CD8-positive, alpha-beta memory T cell (primary cell): ENCODE measurements at regions of chr6 and their contacts with region 1.

Region 1: GRCh38 chr6:37018198-37019064 is 13.0 kb downstream of the FGD2 start:
- DNase-seq: peak; percentile 77 to 93 (median 78)
- H3K4me3 ChIP-seq: no peak overlapping the region
- H3K4me3 Mint-ChIP-seq: peak overlapping the region in 3 of 7 donors; percentile 1 to 28 (median 14)
- H3K27ac ChIP-seq: no peak overlapping the region
- H3K27ac Mint-ChIP-seq: peak overlapping the region; percentile 44 to 91 (median 72)
- H3K4me1 ChIP-seq: peaks cover 37% of the 10 kb centered on the region
- H3K4me1 Mint-ChIP-seq: peaks cover 45 to 48% (median 46%) of the 10 kb centered on the region in 3 donors
- H3K27me3 ChIP-seq: no peaks in the 10 kb centered on the region
- H3K27me3 Mint-ChIP-seq: peaks cover 0 to 1% of the 10 kb centered on the region in 2 donors

Region 2: GRCh38 chr6:36840432-36841403 is 177.7 kb before region 1 on chr6:
- CTCF ChIA-PET with region 1: no interaction called
- POLR2A ChIA-PET with region 1: no interaction called
- DNase-seq: peak; percentile 8 to 52 (median 11)
- H3K4me3 ChIP-seq: peak overlapping the region; percentile 38
- H3K4me3 Mint-ChIP-seq: peak overlapping the region; percentile 46 to 78 (median 74)
- H3K27ac ChIP-seq: no peak overlapping the region
- H3K27ac Mint-ChIP-seq: peak overlapping the region in 2 of 8 donors; percentile 19 to 27
- H3K4me1 ChIP-seq: peaks cover 15% of the 10 kb centered on the region
- H3K4me1 Mint-ChIP-seq: peaks cover 11 to 23% (median 12%) of the 10 kb centered on the region in 3 donors
- H3K27me3 ChIP-seq: peaks cover 15% of the 10 kb centered on the region
- H3K27me3 Mint-ChIP-seq: peaks cover 28 to 31% of the 10 kb centered on the region in 2 donors

Region 3: DNA sequence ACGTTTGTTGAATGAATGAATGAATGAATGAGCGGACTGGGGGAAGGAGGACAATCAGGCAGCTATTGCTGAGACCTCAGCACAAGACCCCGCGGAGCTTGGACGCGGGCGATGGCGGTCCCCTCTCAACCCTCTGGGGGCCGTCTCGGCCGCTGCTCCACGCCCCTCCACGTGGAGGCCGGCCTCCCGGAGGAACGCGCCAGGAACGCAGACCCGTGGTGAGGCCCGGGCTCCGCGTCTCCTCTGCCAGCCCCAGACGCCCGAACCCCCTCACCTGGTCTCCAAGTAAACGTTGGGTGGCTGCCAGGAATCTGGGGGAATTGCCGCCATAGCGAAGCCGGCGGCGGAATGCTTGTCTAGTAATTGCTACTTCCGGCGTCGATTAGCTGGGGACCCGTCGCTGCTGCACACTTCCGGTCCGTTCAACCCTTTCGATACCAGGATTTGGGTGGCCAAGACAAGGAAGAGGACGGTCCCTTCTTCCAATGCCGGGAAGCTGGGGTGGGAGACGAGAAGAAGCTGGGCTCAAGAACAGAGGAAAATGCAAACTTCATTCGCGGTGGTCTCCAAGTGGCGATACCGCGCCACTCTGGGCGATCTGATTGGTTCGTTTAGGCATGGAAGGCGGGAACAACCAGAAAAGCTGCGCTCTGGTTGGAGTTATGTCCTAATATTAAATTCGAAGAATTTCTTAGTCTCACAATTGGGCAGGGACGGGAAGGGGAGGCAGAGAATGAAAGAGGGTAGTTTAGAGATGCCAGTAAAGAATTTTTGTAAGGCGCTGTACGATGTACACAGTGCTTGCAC is 143.8 kb before region 1 on chr6 and contains the start of gene PPIL1:
- CTCF ChIA-PET with region 1: interaction called, 29 read pairs
- POLR2A ChIA-PET with region 1: no interaction called
- DNase-seq: peak; percentile 76 to 92 (median 89)
- H3K4me3 ChIP-seq: peak within 1 kb of the TSS; percentile 87
- H3K4me3 Mint-ChIP-seq: peak within 1 kb of the TSS; percentile 96 to 100 (median 100)
- H3K27ac ChIP-seq: peak within 1 kb of the TSS; percentile 89
- H3K27ac Mint-ChIP-seq: peak within 1 kb of the TSS; percentile 94 to 100 (median 99)
- H3K4me1 ChIP-seq: peaks cover 24% of the 10 kb centered on the region
- H3K4me1 Mint-ChIP-seq: peaks cover 34 to 45% (median 37%) of the 10 kb centered on the region in 3 donors
- H3K27me3 ChIP-seq: peaks cover 3% of the 10 kb centered on the region
- H3K27me3 Mint-ChIP-seq: peaks cover 13 to 23% of the 10 kb centered on the region in 2 donors
- total RNA-seq, gene PPIL1: 66.6 to 68.8 TPM

Region 4: GRCh38 chr6:36912586-36912985 is 105.8 kb before region 1 on chr6:
- CTCF ChIA-PET with region 1: interaction called, 13 read pairs
- POLR2A ChIA-PET with region 1: no interaction called
- DNase-seq: peak; percentile 25 to 67 (median 56)
- H3K4me3 ChIP-seq: peak overlapping the region; percentile 32
- H3K4me3 Mint-ChIP-seq: peak overlapping the region; percentile 12 to 81 (median 78)
- H3K27ac ChIP-seq: no peak overlapping the region
- H3K27ac Mint-ChIP-seq: peak overlapping the region; percentile 79 to 98 (median 90)
- H3K4me1 ChIP-seq: peaks cover 22% of the 10 kb centered on the region
- H3K4me1 Mint-ChIP-seq: peaks cover 25 to 47% (median 39%) of the 10 kb centered on the region in 3 donors
- H3K27me3 ChIP-seq: no peaks in the 10 kb centered on the region
- H3K27me3 Mint-ChIP-seq: no peaks in the 10 kb centered on the region

Region 5: DNA sequence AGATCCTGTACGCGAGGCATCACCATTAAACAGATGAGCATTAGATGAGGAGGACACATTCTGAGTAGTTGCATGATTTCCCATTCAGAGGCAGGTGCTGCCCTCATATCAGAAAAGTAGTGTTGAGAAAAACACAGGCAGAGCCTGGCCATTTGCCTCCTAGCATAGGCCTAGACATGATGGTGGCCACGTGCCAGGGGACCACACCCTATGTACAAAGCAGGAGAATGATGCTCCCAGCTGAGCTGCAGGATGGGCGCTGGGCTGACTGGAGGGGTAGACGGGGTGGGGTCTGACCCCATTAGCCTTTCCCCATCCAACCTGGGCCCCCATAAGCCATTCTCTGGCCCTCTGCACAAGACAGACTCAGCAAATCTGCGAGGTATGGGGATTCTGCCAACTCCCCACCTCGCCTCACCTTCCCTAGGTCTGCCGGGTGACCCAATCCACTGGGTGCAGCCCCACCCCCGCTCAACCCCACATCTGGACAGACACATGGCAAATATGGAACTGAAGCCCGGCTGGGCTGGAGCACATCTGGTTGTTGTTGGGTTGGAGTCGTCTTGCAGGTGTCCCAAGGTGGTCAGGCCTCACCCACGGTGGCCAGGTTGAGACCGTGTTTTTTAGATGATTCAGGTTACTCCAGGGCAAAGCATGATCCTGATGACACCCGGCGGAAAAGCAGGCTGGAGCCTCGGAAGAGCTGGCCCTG is 50.0 kb before region 1 on chr6:
- CTCF ChIA-PET with region 1: no interaction called
- POLR2A ChIA-PET with region 1: no interaction called
- DNase-seq: no peak
- H3K4me3 ChIP-seq: no peak overlapping the region
- H3K4me3 Mint-ChIP-seq: no peak overlapping the region
- H3K27ac ChIP-seq: no peak overlapping the region
- H3K27ac Mint-ChIP-seq: peak overlapping the region in 2 of 8 donors; percentile 17 to 26
- H3K4me1 ChIP-seq: peaks cover 19% of the 10 kb centered on the region
- H3K4me1 Mint-ChIP-seq: peaks cover 16 to 27% (median 21%) of the 10 kb centered on the region in 3 donors
- H3K27me3 ChIP-seq: no peaks in the 10 kb centered on the region
- H3K27me3 Mint-ChIP-seq: no peaks in the 10 kb centered on the region

Region 6: DNA sequence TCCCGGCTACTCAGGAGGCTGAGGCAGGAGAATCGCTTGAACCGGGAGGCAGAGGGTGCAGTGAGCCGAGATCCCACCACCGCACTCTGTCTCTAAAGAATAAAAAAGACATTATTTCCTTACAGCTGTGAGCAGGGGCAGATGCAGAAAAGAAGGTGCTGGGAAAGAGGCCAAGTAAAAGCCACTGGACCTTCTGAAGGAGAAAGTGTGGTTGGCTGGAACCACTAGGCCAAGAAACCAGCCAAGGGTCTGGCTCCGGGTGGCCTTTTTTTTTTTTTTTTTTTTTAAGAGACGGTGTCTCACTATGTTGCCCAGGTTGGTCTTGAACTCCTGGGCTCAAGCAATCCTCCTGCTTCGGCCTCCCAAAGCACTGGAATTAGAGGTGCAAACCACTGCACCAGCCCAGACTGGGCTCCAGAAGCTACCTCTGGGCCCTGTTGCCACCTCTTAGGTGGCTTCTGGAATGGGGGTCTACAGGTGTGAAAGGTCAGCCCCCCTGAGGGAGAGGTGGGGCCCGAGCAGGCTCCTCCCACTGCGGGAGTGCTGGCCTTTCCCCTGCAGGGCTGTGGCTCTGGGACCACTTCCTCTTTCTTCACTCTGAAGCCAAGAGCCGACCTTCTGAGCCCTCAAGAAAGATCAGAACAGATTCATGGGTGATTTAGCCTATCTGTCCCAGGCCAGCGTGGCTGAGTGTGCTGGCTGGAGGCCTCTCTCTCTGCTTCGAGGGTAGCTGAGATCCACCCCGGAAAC is 13.2 kb before region 1 on chr6 and contains the start of gene FGD2:
- CTCF ChIA-PET with region 1: interaction called, 21 read pairs
- POLR2A ChIA-PET with region 1: interaction called, 4 read pairs
- DNase-seq: no peak
- H3K4me3 ChIP-seq: no peak within 1 kb of the TSS
- H3K4me3 Mint-ChIP-seq: peak within 1 kb of the TSS in 6 of 7 donors; percentile 53 to 80 (median 74)
- H3K27ac ChIP-seq: no peak within 1 kb of the TSS
- H3K27ac Mint-ChIP-seq: peak within 1 kb of the TSS in 7 of 8 donors; percentile 58 to 96 (median 79)
- H3K4me1 ChIP-seq: peaks cover 16% of the 10 kb centered on the region
- H3K4me1 Mint-ChIP-seq: peaks cover 9 to 29% (median 14%) of the 10 kb centered on the region in 3 donors
- H3K27me3 ChIP-seq: no peaks in the 10 kb centered on the region
- H3K27me3 Mint-ChIP-seq: no peaks in the 10 kb centered on the region
- total RNA-seq, gene FGD2: 1.2 to 1.3 TPM

Region 7: DNA sequence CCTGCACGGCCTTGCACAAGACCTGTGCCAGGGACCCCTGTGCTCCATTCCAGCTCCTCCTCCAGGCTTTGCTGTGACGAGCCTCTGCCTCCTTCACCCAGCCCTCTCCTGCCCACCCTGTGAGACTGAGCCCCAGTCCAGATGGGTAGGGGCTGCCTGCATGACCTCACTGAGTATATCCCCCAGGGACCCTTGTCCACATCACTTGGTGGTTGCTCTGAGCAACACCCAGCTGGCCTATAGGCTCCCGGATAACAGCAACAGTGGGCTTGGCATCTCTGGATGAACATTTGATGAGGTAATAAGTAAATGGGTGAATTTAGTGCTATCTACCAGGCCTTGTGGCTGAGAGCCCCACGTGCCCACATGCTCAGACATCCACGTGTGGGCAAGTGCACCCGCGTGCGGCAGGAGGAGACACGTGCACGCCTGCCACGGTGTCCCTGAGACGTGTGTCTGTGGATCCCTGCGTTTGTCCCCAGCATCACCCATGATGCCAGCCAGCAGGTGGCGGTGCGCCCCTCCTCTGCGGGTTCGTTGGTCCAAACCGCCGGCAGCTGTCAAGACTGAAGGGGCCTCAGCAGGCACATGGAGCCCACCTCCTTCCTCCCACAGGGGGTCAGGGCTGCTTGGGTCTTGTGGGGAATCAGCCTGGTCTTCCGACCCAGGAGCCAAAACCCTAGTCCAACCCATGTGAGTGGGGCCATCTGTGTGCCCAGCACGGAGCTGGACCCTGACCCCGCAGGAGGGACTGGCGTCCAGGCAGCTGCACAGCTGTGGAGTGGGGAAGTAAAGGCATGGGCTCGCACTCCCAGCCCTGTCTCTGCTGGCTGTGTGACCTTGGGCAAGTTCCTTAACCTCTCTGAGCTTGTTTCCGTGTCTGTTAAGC is 33.0 kb after region 1 on chr6:
- CTCF ChIA-PET with region 1: interaction called, 152 read pairs
- POLR2A ChIA-PET with region 1: interaction called, 10 read pairs
- DNase-seq: peak; percentile 80 to 90 (median 82)
- H3K4me3 ChIP-seq: peak overlapping the region; percentile 75
- H3K4me3 Mint-ChIP-seq: peak overlapping the region; percentile 64 to 95 (median 84)
- H3K27ac ChIP-seq: peak overlapping the region; percentile 91
- H3K27ac Mint-ChIP-seq: peak overlapping the region; percentile 80 to 100 (median 94)
- H3K4me1 ChIP-seq: peaks cover 60% of the 10 kb centered on the region
- H3K4me1 Mint-ChIP-seq: peaks cover 58 to 63% (median 61%) of the 10 kb centered on the region in 3 donors
- H3K27me3 ChIP-seq: no peaks in the 10 kb centered on the region
- H3K27me3 Mint-ChIP-seq: no peaks in the 10 kb centered on the region

Region 8: GRCh38 chr6:37190159-37190535 is 171.7 kb after region 1 on chr6:
- CTCF ChIA-PET with region 1: interaction called, 14 read pairs
- POLR2A ChIA-PET with region 1: interaction called, 4 read pairs
- DNase-seq: no peak
- H3K4me3 ChIP-seq: no peak overlapping the region
- H3K4me3 Mint-ChIP-seq: peak overlapping the region in 1 of 7 donors; percentile 51
- H3K27ac ChIP-seq: peak overlapping the region; percentile 48
- H3K27ac Mint-ChIP-seq: peak overlapping the region in 3 of 8 donors; percentile 14 to 86 (median 51)
- H3K4me1 ChIP-seq: peaks cover 54% of the 10 kb centered on the region
- H3K4me1 Mint-ChIP-seq: peaks cover 48 to 66% (median 59%) of the 10 kb centered on the region in 3 donors
- H3K27me3 ChIP-seq: no peaks in the 10 kb centered on the region
- H3K27me3 Mint-ChIP-seq: no peaks in the 10 kb centered on the region

Region 9: GRCh38 chr6:37221585-37222124 is 203.2 kb after region 1 on chr6:
- CTCF ChIA-PET with region 1: interaction called, 615 read pairs
- POLR2A ChIA-PET with region 1: no interaction called
- DNase-seq: no peak
- H3K4me3 ChIP-seq: peak overlapping the region; percentile 90
- H3K4me3 Mint-ChIP-seq: peak overlapping the region; percentile 83 to 94 (median 87)
- H3K27ac ChIP-seq: peak overlapping the region; percentile 12
- H3K27ac Mint-ChIP-seq: peak overlapping the region in 2 of 8 donors; percentile 54 to 79
- H3K4me1 ChIP-seq: peaks cover 9% of the 10 kb centered on the region
- H3K4me1 Mint-ChIP-seq: peaks cover 8 to 13% (median 12%) of the 10 kb centered on the region in 3 donors
- H3K27me3 ChIP-seq: no peaks in the 10 kb centered on the region
- H3K27me3 Mint-ChIP-seq: no peaks in the 10 kb centered on the region